K562 (cell line): ENCODE measurements at regions of chr15 and their contacts with region 1.

Region 1: GRCh38 chr15:49881866-49882265 is 237.2 kb downstream of the ATP8B4 start:
- DNase-seq: no peak
- ATAC-seq: no peak
- H3K4me3 ChIP-seq: no peak overlapping the region
- H3K27ac ChIP-seq: no peak overlapping the region
- H3K4me1 ChIP-seq: no peaks in the 10 kb centered on the region
- H3K27me3 ChIP-seq: no peaks in the 10 kb centered on the region
- CTCF ChIP-seq: no peak
- EP300 ChIP-seq: no peak
- POLR2A ChIP-seq: no peak
- RAD21 ChIP-seq: no peak

Region 2: GRCh38 chr15:49895337-49896223 is 13.7 kb after region 1 on chr15:
- CTCF ChIA-PET with region 1: no interaction called
- POLR2A ChIA-PET with region 1: interaction called, 3 read pairs
- in situ Hi-C with region 1: no loop called
- intact Hi-C with region 1: loop called (anchors 2 kb)
- DNase-seq: no peak
- ATAC-seq: no peak
- H3K4me3 ChIP-seq: no peak overlapping the region
- H3K27ac ChIP-seq: no peak overlapping the region
- H3K4me1 ChIP-seq: no peaks in the 10 kb centered on the region
- H3K27me3 ChIP-seq: no peaks in the 10 kb centered on the region
- CTCF ChIP-seq: no peak
- EP300 ChIP-seq: no peak
- POLR2A ChIP-seq: no peak
- RAD21 ChIP-seq: no peak